ENCODE measurements at regions of chr9 and their contacts with region 1.

Region 1: DNA sequence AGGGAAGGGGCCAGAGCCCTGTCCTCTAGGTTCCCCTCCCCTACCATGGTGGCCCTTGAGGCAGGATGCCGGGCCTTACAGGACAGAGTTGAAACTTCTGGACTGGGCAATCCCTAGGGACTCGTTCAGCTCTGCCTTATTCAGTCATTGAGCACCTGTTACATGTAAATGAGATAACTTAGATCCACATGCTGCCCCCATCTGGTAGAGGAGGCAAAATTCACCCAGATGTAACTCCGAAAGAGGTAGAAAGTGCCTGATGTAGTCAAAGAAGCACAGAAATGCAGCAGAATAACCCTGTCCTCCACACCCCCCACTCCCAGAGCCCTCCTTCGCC is 1.5 kb downstream of the GGTA1 start:
- DNase-seq: peak in 2 of 3 donors; percentile 43 to 73
- ATAC-seq: peak; percentile 54 to 65
- H3K4me3 ChIP-seq: peak overlapping the region; percentile 59
- H3K27ac ChIP-seq: peak overlapping the region; percentile 57
- H3K4me1 ChIP-seq: peaks cover 2% of the 10 kb centered on the region
- H3K27me3 ChIP-seq: no peaks in the 10 kb centered on the region

Region 2: DNA sequence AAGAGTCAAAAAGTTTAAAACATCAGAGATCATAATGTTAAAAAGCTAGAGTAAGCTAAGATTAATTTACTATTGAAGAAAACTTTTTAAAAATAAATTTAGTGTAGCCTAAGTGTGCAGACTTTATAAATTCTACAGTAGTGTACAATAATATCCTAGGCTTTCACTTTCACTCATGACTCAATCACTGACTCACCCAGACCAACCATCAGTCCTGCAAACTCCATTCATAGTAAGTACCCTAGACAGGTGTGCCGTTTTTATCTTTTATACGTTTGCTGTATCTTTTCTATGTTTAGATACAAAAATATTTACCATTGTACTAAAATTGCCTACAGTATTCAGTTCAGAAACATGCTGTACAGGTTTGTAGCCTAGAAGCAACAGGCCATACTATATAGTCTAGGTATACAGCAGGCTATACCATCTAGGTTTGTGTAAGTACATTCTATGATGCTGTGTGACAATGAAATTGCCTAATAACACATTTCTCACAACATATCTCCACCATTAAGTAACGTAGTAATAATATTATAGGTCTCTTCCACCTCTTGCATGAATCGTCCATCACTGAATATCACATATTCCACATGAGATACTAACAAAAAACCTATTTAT is 843.0 kb before region 1 on chr9:
- intact Hi-C with region 1: no loop called
- DNase-seq: no peak
- ATAC-seq: no peak
- H3K4me3 ChIP-seq: no peak overlapping the region
- H3K27ac ChIP-seq: no peak overlapping the region
- H3K4me1 ChIP-seq: no peaks in the 10 kb centered on the region
- H3K27me3 ChIP-seq: no peaks in the 10 kb centered on the region

Region 3: GRCh38 chr9:121463026-121463807 is 34.9 kb before region 1 on chr9:
- intact Hi-C with region 1: loop called in 1 of 4 experiments (anchors 5 kb)
- DNase-seq: peak; percentile 70 to 90 (median 88)
- ATAC-seq: peak; percentile 81 to 91
- H3K4me3 ChIP-seq: no peak overlapping the region
- H3K27ac ChIP-seq: peak overlapping the region; percentile 8
- H3K4me1 ChIP-seq: peaks cover 6% of the 10 kb centered on the region
- H3K27me3 ChIP-seq: no peaks in the 10 kb centered on the region